A673 (cell line): ENCODE measurements at regions of chr19 and their contacts with region 1.

Region 1: DNA sequence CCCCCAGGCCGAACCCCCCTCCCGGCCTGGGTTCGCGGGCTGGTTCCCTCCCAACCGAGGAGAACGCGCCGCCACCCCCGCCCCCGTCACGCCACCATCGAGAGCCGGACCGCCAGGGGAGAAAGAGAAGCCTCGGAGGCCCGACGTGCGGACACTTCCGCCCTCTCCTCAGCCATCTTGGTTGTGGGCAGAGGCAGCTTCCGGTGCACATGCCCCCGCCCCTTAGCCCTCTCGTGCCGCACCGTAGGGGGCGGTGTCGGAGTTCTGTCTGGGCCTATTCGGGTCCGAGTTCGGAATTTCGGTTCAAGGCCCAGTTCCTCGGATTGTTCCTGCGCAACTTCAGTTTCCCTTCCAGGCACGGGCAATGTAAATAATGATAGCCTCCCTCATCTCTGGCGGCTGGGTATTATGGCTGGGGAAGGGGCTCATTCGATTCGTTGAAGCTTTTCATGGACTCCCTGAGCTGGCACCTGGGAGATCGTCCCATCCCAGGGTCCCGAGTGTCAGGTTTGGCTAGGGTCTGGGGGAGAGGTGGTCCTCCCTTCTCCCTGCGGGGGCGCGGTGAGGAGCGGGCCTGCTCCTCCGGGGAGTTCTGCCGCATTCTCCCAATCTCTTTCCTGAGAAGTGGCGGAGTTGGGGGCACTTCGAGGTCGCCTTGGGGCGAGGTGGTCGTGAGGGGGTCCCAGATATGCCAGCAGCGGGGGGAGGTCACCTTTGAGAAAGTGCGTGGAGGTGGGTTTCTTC is at the starts of genes IER2 and STX10:
- DNase-seq: peak; percentile 97
- H3K4me3 ChIP-seq: peak within 1 kb of the TSS; percentile 72
- H3K27ac ChIP-seq: peak within 1 kb of the TSS; percentile 98
- H3K4me1 ChIP-seq: peaks cover 6% of the 10 kb centered on the region
- H3K27me3 ChIP-seq: no peaks in the 10 kb centered on the region
- CTCF ChIP-seq: peak; percentile 55
- total RNA-seq, gene IER2: 148 and 164 TPM in 2 replicates
- total RNA-seq, gene STX10: 63.3 and 69.5 TPM in 2 replicates

Region 2: GRCh38 chr19:13117772-13118423 is 32.5 kb before region 1 on chr19 and contains the start of gene NACC1:
- CTCF ChIA-PET with region 1: interaction called, 3 read pairs
- POLR2A ChIA-PET with region 1: interaction called, 6 read pairs
- intact Hi-C with region 1: loop called (anchors 2 kb)
- DNase-seq: peak; percentile 97
- H3K4me3 ChIP-seq: peak within 1 kb of the TSS; percentile 82
- H3K27ac ChIP-seq: peak within 1 kb of the TSS; percentile 95
- H3K4me1 ChIP-seq: peaks cover 45% of the 10 kb centered on the region
- H3K27me3 ChIP-seq: no peaks in the 10 kb centered on the region
- CTCF ChIP-seq: no peak
- total RNA-seq, gene NACC1: 119 and 126 TPM in 2 replicates

Region 3: GRCh38 chr19:13181747-13182388 is 31.5 kb after region 1 on chr19:
- CTCF ChIA-PET with region 1: interaction called, 3 read pairs
- POLR2A ChIA-PET with region 1: interaction called, 13 read pairs
- intact Hi-C with region 1: no loop called
- DNase-seq: peak; percentile 57
- H3K4me3 ChIP-seq: no peak overlapping the region
- H3K27ac ChIP-seq: peak overlapping the region; percentile 77
- H3K4me1 ChIP-seq: peaks cover 12% of the 10 kb centered on the region
- H3K27me3 ChIP-seq: no peaks in the 10 kb centered on the region
- CTCF ChIP-seq: no peak

Region 4: GRCh38 chr19:13234518-13234917 is 84.2 kb after region 1 on chr19:
- CTCF ChIA-PET with region 1: no interaction called
- POLR2A ChIA-PET with region 1: no interaction called
- intact Hi-C with region 1: no loop called
- DNase-seq: peak; percentile 87
- H3K4me3 ChIP-seq: no peak overlapping the region
- H3K27ac ChIP-seq: no peak overlapping the region
- H3K4me1 ChIP-seq: peaks cover 5% of the 10 kb centered on the region
- H3K27me3 ChIP-seq: no peaks in the 10 kb centered on the region
- CTCF ChIP-seq: peak; percentile 92

Region 5: DNA sequence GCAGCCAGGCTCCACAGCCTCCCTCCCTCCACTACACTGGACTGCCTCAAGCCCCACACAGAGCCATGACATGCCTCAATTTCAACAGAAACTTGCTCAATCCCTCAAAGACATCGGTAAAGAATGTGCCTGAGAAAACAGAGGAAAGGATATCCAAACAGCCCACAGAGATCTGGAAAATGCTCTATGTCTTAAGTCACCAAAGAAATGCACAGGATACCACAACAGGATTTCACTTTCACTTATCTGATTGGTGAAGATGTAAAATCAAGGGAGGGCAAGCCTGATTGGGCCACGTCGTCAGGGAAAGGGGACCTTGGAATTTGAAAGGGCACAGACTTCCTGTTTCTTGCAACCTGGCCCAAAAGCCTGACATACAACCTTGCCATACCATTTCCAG is 341.8 kb after region 1 on chr19:
- CTCF ChIA-PET with region 1: no interaction called
- POLR2A ChIA-PET with region 1: no interaction called
- intact Hi-C with region 1: no loop called
- DNase-seq: no peak
- H3K4me3 ChIP-seq: no peak overlapping the region
- H3K27ac ChIP-seq: no peak overlapping the region
- H3K4me1 ChIP-seq: no peaks in the 10 kb centered on the region
- H3K27me3 ChIP-seq: no peaks in the 10 kb centered on the region
- CTCF ChIP-seq: no peak